HAP-1 (cell line): ENCODE measurements at regions of chr15 and their contacts with region 1.

Region 1: DNA sequence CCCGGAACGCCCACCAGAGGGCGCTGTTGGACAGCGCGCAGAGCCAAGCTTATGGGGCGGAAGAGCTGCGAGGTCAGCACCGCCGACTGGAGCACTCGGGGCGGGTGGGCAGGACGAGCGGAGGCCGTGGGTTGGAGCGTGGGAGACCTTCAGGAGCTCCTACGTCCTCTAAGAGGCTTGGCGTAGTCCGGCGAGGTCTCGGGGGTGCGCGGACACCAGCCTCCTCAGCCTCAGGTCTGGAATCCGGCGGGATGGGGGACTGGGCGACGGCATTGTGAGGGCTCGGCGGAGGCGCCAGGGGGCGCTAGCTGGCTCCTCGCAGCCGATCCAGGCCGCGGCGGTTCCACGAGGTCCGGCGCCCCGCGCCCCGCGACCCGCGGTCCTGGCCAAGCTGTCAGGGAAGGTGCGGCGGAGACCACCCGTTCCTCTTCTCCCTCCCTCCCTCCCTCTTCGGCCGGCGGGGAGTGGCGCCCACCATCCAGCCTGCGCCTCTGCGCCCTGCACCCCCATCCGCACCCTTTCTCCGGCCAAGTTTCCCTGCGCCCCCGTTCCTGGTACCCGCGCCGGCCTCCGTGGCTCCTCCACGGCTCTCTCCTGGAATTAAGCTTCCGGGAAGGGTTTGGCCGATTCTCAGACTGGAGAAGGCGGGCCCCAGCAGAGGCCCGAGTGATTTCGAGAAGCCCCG is 24.3 kb upstream of the POLG start:
- DNase-seq: peak; percentile 56 to 82
- H3K4me3 ChIP-seq: peak overlapping the region; percentile 32
- H3K4me1 ChIP-seq: no peaks in the 10 kb centered on the region; the same call in 1 of the 2 replicates
- H3K27me3 ChIP-seq: peaks cover 77% of the 10 kb centered on the region

Region 2: DNA sequence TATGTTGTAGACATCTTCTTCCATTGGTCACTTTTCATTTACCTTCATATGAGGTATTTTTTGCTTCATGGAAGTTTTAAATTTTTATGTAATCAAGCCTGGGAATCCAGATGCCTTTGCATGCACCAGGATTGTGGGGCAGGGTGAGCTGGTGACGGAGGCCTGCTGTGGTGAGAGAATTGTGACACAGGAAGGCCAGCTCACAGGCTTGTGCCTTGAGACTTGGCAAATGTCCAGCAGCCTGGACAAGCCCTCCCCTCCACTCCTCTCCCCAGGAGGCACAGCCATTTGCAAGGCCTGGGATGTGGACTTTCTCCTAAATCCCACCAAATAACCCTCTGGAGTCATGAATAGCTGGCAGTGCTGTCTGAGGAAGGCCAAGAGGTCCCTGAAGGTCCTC is 70.1 kb after region 1 on chr15:
- in situ Hi-C with region 1: loop called (anchors 5 kb)
- DNase-seq: no peak
- H3K4me3 ChIP-seq: no peak overlapping the region
- H3K4me1 ChIP-seq: no peaks in the 10 kb centered on the region
- H3K27me3 ChIP-seq: no peaks in the 10 kb centered on the region; the same call in 1 of the 2 replicates

Region 3: GRCh38 chr15:89472785-89473256 is 113.9 kb after region 1 on chr15:
- in situ Hi-C with region 1: loop called (anchors 5 kb)
- DNase-seq: peak; percentile 65 to 84
- H3K4me3 ChIP-seq: no peak overlapping the region
- H3K4me1 ChIP-seq: no peaks in the 10 kb centered on the region
- H3K27me3 ChIP-seq: peaks cover 26% of the 10 kb centered on the region